Left ventricle myocardium superior (tissue), 1 donor: ENCODE measurements at regions of chr10 and their contacts with region 1.

Region 1: DNA sequence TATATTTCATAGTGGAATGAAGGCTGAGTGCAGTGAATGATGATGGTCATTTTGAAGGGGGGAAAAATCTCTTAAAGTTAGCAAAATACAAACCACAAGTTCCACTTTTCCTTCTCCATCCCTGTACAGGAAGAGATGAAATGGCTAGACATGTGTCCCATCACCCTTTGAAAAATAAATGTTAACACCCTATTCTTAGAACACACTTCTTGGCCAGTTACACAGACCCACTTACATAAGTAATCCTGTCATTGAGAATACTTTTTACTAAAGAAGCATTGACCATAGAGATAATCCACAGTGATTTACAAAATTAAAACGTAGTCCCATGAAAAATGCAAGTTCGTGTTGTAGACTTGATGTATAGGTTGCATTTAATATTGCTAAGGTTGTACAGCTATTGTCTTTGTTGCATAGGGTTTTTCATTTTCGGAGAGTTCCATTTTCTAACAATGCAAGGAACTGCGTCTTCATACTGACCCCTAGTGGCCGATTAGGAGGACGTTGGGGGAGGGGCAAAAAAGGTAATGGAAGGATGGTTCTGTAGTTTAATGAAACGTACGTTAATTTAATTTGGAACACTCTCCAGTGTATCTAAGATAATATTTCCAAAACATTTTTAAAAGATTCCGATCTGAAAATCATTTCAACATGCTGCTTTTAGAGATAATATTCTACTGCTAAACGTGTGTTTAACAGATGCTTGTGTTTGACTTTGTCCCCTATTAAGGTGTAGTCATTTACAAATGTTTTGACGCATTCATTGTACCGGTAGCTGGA is 60.9 kb downstream of the ARMC3 start:
- DNase-seq: no peak
- ATAC-seq: peak; percentile 89

Region 2: DNA sequence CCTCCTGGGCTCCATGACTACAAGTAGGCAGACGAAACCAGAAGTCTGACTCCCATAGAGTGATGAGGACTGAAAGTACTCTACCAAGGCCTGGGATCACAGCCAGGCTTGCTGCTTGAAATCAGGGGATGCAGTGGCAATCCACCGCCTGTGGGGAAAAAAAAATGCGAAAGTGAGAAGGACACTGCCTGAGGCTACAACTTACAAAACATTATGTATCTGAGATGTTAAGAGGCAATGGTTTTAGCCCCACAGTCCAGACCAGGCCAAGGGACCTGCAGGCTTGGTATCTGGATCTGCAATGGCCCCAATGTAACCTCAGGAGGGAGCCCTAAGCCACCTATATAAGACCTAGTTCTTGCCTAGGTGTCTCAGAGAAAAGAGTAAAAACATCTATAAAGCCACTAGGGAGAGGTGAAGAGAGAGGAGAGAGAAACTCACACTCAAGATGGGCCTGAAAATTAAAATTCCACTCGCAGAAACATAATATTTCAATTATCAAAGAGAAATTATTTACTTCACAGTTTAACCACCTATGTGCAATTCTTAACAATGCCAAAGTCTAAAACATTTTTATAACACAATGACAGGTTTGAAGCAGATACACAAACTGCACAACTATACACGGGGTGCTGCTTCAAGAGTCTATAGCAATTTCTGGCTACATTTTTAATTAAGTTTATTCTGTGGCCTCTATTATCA is 999.2 kb before region 1 on chr10:
- intact Hi-C with region 1: loop called (anchors 5 kb)
- DNase-seq: peak; percentile 74
- ATAC-seq: peak; percentile 96

Region 3: GRCh38 chr10:22010973-22011408 is 977.8 kb before region 1 on chr10:
- intact Hi-C with region 1: loop called (anchors 5 kb)
- DNase-seq: no peak
- ATAC-seq: no peak

Region 4: GRCh38 chr10:22911889-22912762 is 76.6 kb before region 1 on chr10:
- intact Hi-C with region 1: no loop called
- DNase-seq: no peak
- ATAC-seq: peak; percentile 61